Tibial artery (tissue), 4 donors: ENCODE measurements at regions of chr5 and their contacts with region 1.

Region 1: GRCh38 chr5:172800088-172800551 is 29.1 kb upstream of the DUSP1 start:
- DNase-seq: peak; percentile 77 to 88
- H3K4me3 ChIP-seq: no peak overlapping the region
- H3K27ac ChIP-seq: peak overlapping the region; percentile 87 to 90
- H3K4me1 ChIP-seq: peaks cover 0 to 61% (median 36%) of the 10 kb centered on the region in 4 donors
- H3K27me3 ChIP-seq: no peaks in the 10 kb centered on the region
- CTCF ChIP-seq: no peak

Region 2: GRCh38 chr5:172828911-172829431 is 28.9 kb after region 1 on chr5:
- intact Hi-C with region 1: loop called (anchors 2 kb)
- DNase-seq: peak in 1 of 2 donors; percentile 23
- H3K4me3 ChIP-seq: no peak overlapping the region
- H3K27ac ChIP-seq: no peak overlapping the region
- H3K4me1 ChIP-seq: peaks cover 0 to 14% (median 10%) of the 10 kb centered on the region in 4 donors
- H3K27me3 ChIP-seq: no peaks in the 10 kb centered on the region
- CTCF ChIP-seq: no peak

Region 3: DNA sequence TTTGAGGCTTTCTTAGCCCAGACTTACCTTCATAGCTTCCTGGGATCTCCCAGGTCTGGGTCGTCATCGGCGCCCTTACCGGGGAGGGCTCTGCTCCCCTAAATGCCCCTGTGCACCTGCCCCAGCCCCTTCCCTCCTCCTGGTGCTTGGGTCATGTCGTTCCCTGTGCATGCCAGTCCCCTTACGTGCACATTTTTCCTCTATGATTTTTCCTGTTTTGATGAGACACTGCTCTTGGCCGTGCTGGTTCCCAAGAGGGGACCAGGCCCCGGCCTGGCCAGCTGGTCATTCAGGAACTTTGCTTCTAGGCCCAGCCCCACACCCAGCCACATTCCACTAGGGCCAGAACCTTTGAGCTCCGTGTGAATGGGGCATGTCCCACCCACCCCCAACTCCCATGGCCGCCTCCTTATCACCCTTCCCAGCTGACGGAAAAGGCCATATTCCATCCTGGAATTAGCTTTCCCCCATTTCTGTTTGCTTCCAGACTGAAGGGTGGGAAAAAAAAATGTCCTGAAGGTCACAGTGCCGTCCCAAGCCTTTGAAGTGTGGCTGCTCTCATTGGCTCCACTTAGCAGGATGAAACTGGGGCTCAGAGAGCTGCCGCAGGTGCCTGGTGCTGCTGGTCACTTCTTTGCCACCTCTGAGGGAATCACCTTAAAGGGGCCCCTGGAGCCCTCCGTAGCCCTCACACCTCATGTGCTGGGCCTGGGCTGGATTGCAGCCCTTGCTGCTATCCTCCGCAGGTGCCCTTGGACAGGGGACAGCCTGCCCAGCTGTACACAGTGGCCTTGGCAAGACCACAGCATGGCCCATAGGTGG is 59.1 kb after region 1 on chr5:
- intact Hi-C with region 1: loop called (anchors 5 kb)
- DNase-seq: peak; percentile 86 to 91
- H3K4me3 ChIP-seq: peak overlapping the region in 1 of 2 donors; percentile 17
- H3K27ac ChIP-seq: peak overlapping the region; percentile 89 to 90
- H3K4me1 ChIP-seq: peaks cover 4 to 89% (median 72%) of the 10 kb centered on the region in 4 donors
- H3K27me3 ChIP-seq: no peaks in the 10 kb centered on the region
- CTCF ChIP-seq: no peak